Activated CD8-positive, alpha-beta T cell treated with anti-CD3 and anti-CD28 coated beads for 36 hours (primary cell): ENCODE measurements at regions of chr19 and their contacts with region 1.

Region 1: GRCh38 chr19:38402967-38403861 is at the start of gene FAM98C:
- DNase-seq: no peak
- ATAC-seq: peak; percentile 99
- H3K4me3 Mint-ChIP-seq: peak within 1 kb of the TSS; percentile 83
- H3K27ac Mint-ChIP-seq: peak within 1 kb of the TSS; percentile 88
- H3K4me1 Mint-ChIP-seq: peaks cover 9% of the 10 kb centered on the region
- H3K27me3 Mint-ChIP-seq: peaks cover 3% of the 10 kb centered on the region
- CTCF ChIP-seq: peak; percentile 99
- total RNA-seq, gene FAM98C: 11.7 to 12.5 TPM

Region 2: DNA sequence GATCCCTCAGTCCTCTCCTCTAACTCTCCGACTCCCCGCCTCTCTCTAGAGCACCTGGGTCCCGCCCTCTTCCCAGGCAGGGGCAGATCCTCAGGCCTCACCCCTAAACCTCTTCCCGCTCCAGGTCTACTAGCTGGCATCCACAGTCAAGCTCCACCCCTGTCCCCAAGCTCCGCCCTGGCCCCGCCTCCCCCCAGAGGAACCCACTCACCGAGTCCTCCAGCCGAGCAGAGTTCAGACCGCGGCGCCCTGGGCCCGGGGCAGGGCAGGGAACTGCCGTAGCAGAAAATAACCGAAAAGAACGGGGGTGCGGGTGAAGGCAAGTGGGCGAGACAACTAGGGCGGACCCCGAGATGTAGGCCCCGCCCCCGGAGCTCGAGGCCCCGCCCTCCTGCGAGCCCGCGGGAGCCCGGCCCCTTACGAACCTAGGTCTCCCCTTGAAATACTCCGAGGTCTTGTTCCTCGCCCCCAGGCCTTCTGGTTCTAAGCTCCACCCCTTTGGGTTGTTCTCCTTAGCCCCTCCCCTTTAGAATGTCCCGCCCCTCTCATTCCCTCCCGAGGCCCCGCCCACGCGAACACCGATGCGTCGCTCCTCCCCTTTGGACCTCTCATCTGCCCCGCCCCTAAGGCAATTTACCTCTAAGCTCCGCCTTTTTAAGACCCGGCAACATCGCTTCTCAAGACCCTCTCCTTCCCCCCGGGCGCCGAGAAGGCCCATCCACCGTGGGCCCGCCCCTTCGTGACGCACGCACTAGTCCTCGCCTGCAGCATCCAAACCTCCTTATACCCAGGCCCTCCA is 15.5 kb before region 1 on chr19 and contains the start of gene GGN:
- CTCF ChIA-PET with region 1: interaction called, 21 read pairs
- POLR2A ChIA-PET with region 1: interaction called, 5 read pairs
- intact Hi-C with region 1: no loop called
- DNase-seq: peak; percentile 91
- ATAC-seq: peak; percentile 83
- H3K4me3 Mint-ChIP-seq: peak within 1 kb of the TSS; percentile 68
- H3K27ac Mint-ChIP-seq: no peak within 1 kb of the TSS
- H3K4me1 Mint-ChIP-seq: peaks cover 20% of the 10 kb centered on the region
- H3K27me3 Mint-ChIP-seq: peaks cover 25% of the 10 kb centered on the region
- CTCF ChIP-seq: no peak
- total RNA-seq, gene GGN: not detected

Region 3: DNA sequence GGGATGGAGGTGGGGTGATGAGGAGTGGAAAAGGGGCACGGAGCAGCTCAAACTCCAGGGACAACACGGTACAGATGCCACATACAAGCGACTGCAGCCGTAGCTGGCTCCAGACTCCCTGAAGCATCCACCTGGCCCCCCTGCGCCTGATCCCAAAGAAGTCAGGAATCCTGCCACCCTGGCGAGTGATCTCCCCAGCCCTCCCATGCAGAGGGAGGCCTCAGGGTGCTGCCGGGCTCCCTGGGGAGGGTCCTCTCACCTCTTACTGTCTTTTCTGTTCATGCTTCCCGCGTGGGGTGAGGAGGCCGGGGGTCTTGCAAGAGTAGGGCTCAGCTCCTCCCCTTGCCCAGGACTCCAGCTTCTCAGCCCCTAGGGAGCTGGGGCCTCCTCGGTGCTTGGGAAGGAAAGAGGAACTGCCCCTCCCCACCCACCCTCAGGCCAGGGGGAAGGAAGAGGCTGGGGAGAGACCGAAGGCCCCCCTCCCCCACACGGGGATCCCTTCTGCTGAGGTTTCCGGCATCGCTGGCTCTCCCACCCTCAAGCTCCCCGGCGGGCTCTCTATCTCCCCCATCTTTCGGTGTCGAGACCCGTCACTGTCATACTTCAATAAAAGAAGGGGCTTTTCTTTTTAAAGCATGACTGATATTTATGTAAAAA is 22.7 kb after region 1 on chr19 and contains the start of gene RASGRP4:
- CTCF ChIA-PET with region 1: interaction called, 35 read pairs
- POLR2A ChIA-PET with region 1: no interaction called
- intact Hi-C with region 1: no loop called
- DNase-seq: peak; percentile 81
- ATAC-seq: peak; percentile 67
- H3K4me3 Mint-ChIP-seq: no peak within 1 kb of the TSS
- H3K27ac Mint-ChIP-seq: peak within 1 kb of the TSS; percentile 21
- H3K4me1 Mint-ChIP-seq: peaks cover 23% of the 10 kb centered on the region
- H3K27me3 Mint-ChIP-seq: peaks cover 7% of the 10 kb centered on the region
- CTCF ChIP-seq: no peak
- total RNA-seq, gene RASGRP4: 1.4 to 1.8 TPM

Region 4: DNA sequence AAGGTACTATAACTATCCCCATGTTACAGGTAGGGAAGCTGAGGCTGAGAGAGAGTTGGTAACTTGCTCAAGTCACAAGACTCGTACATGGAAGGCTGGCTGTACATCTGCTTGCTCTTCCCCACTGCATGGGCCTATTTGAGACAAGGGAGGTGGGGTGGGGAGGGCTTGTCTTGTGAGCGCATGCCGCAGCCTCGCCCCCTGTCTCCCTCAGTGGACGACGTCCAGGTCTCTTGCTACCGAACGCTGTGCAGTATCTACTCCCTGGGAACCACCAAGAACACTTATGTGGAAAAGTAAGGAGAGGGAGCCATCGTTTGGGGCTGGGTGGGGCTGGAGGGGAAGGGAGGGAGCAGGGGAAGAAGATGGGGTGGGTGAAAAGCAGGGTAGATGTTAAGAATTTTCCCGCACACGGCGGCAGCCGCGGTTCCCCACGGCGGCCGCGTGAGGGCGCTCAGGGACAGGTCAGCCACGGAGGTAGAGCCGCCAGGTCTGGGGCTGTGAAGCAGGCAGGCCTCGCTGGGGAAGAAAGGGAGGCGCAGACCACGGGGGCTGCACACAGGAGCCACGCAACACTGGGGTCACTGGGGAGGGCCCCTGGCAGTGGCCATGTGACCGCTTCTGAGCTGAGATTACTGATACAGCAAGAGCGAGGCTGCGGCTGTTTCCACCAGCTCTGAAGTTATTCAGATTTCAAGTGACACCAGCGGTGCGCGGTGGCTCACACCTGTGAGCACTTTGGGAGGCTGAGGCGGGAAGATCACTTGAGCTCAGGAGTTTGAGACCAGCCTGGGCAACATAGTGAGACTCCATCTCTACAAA is 111.8 kb after region 1 on chr19:
- CTCF ChIA-PET with region 1: interaction called, 37 read pairs
- POLR2A ChIA-PET with region 1: interaction called, 3 read pairs
- intact Hi-C with region 1: no loop called
- DNase-seq: peak; percentile 81
- ATAC-seq: peak; percentile 96
- H3K4me3 Mint-ChIP-seq: no peak overlapping the region
- H3K27ac Mint-ChIP-seq: no peak overlapping the region
- H3K4me1 Mint-ChIP-seq: peaks cover 15% of the 10 kb centered on the region
- H3K27me3 Mint-ChIP-seq: peaks cover 3% of the 10 kb centered on the region
- CTCF ChIP-seq: peak; percentile 95

Region 5: DNA sequence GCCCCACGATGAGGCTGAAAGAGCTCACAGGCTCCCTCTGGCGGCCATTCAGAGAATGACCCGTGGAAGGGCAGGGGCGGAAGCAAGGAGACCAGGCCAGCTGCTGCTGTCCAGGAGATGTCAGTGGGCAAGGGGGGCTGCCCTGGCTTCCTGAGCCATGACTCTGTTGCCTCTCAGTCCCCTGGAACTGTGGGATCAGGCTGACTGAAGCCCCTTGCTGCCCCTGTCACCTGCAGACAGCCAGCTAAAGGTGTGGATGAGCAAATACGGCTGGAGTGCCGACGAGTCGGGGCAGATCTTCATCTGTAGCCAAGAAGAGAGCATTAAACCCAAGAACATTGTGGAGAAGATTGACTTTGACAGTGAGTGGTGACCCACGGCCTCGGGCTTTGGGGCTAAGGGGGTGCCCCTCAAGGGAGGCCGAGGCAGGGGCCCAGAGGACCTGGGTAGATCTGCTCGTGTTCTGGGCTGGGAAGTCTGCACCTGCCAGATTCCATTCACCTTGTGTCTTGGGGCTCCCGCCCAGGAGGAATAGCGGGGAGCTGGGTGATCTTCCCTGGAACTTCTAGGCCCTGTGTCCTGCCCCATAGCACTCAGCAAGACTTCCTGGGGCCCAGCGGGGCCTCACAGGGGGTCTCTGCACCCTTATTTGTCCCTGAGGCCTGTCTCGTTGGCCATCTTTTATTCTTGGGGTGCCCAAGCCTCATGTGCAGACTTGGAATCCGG is 231.7 kb after region 1 on chr19:
- CTCF ChIA-PET with region 1: interaction called, 37 read pairs
- POLR2A ChIA-PET with region 1: interaction called, 3 read pairs
- intact Hi-C with region 1: loop called (anchors 10 kb)
- DNase-seq: peak; percentile 80
- ATAC-seq: no peak
- H3K4me3 Mint-ChIP-seq: no peak overlapping the region
- H3K27ac Mint-ChIP-seq: peak overlapping the region; percentile 76
- H3K4me1 Mint-ChIP-seq: peaks cover 33% of the 10 kb centered on the region
- H3K27me3 Mint-ChIP-seq: no peaks in the 10 kb centered on the region
- CTCF ChIP-seq: peak; percentile 95